Right lobe of liver (tissue), 6 donors: ENCODE measurements at regions of chr11 and their contacts with region 1.

Region 1: GRCh38 chr11:75031771-75032549 is 43.2 kb downstream of the NEU3 start:
- DNase-seq: peak; percentile 79 to 83 (median 79)
- ATAC-seq: peak; percentile 86 to 93 (median 92)
- H3K4me3 ChIP-seq: no peak overlapping the region
- H3K27ac ChIP-seq: no peak overlapping the region
- H3K4me1 ChIP-seq: no peaks in the 10 kb centered on the region
- H3K27me3 ChIP-seq: no peaks in the 10 kb centered on the region
- CTCF ChIP-seq: peak; percentile 66 to 79 (median 72)
- POLR2A ChIP-seq: no peak

Region 2: GRCh38 chr11:74929431-74930363 is 102.3 kb before region 1 on chr11:
- intact Hi-C with region 1: loop called in 1 of 2 experiments (anchors 5 kb)
- DNase-seq: peak in 2 of 3 donors; percentile 37 to 70
- ATAC-seq: peak; percentile 86 to 97 (median 92)
- H3K4me3 ChIP-seq: no peak overlapping the region
- H3K27ac ChIP-seq: no peak overlapping the region
- H3K4me1 ChIP-seq: no peaks in the 10 kb centered on the region
- H3K27me3 ChIP-seq: no peaks in the 10 kb centered on the region
- CTCF ChIP-seq: peak; percentile 82 to 92 (median 90)
- POLR2A ChIP-seq: no peak

Region 3: GRCh38 chr11:75142714-75143419 is 110.9 kb after region 1 on chr11:
- intact Hi-C with region 1: no loop called
- DNase-seq: peak; percentile 55 to 70 (median 70)
- ATAC-seq: peak; percentile 63 to 81 (median 76)
- H3K4me3 ChIP-seq: no peak overlapping the region
- H3K27ac ChIP-seq: no peak overlapping the region
- H3K4me1 ChIP-seq: peaks cover 0 to 9% (median 0%) of the 10 kb centered on the region in 4 donors
- H3K27me3 ChIP-seq: no peaks in the 10 kb centered on the region
- CTCF ChIP-seq: no peak
- POLR2A ChIP-seq: no peak